Motor neuron (in vitro differentiated cells): ENCODE measurements at regions of chr7 and their contacts with region 1.

Region 1: DNA sequence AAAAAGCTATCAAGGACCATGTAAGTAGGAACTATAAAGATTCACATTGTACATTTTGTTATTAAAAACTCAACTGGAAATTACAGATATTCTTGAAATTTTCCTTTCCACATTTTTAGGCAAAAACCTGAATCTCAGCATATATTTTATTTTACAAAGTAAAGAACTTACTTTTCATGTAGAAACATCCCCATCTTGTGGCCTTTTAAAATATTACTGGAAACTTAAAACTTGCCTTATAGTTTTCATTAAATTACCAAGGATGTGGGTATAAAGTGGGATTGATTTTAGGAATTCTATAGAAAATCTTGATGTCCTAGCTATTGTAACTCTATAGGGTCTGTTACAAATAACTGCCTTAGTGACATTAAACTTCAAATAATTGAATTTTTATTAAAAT is 10.6 kb downstream of the DBF4 start:
- ATAC-seq: no peak
- H3K4me3 ChIP-seq: no peak overlapping the region
- H3K27ac ChIP-seq: no peak overlapping the region
- H3K4me1 ChIP-seq: no peaks in the 10 kb centered on the region

Region 2: GRCh38 chr7:87797798-87798403 is 89.0 kb before region 1 on chr7:
- in situ Hi-C with region 1: loop called in 1 of 9 experiments (anchors 10 kb)
- ATAC-seq: peak in 5 of 8 experiments; percentile 64 to 75 (median 71)
- H3K4me3 ChIP-seq: no peak overlapping the region
- H3K27ac ChIP-seq: no peak overlapping the region
- H3K4me1 ChIP-seq: no peaks in the 10 kb centered on the region